ENCODE measurements at regions of chr2 and their contacts with region 1.

Region 1: GRCh38 chr2:213609570-213610170 is 325.4 kb downstream of the SPAG16 start:
- DNase-seq: no peak
- ATAC-seq: no peak
- H3K4me3 ChIP-seq: no peak overlapping the region
- H3K27ac ChIP-seq: no peak overlapping the region
- H3K4me1 ChIP-seq: no peaks in the 10 kb centered on the region
- H3K27me3 ChIP-seq: no peaks in the 10 kb centered on the region
- CTCF ChIP-seq: no peak
- EP300 ChIP-seq: no peak
- POLR2A ChIP-seq: no peak
- RAD21 ChIP-seq: no peak

Region 2: GRCh38 chr2:214193943-214194342 is 584.3 kb after region 1 on chr2:
- CTCF ChIA-PET with region 1: no interaction called
- POLR2A ChIA-PET with region 1: no interaction called
- in situ Hi-C with region 1: no loop called
- intact Hi-C with region 1: no loop called
- DNase-seq: no peak
- ATAC-seq: no peak
- H3K4me3 ChIP-seq: no peak overlapping the region
- H3K27ac ChIP-seq: no peak overlapping the region
- H3K4me1 ChIP-seq: no peaks in the 10 kb centered on the region
- H3K27me3 ChIP-seq: no peaks in the 10 kb centered on the region
- CTCF ChIP-seq: no peak
- EP300 ChIP-seq: no peak
- POLR2A ChIP-seq: no peak
- RAD21 ChIP-seq: no peak

Region 3: GRCh38 chr2:214865363-214865762 is 1255.7 kb after region 1 on chr2:
- CTCF ChIA-PET with region 1: no interaction called
- POLR2A ChIA-PET with region 1: no interaction called
- in situ Hi-C with region 1: no loop called
- intact Hi-C with region 1: loop called (anchors 10 kb)
- DNase-seq: no peak
- ATAC-seq: no peak
- H3K4me3 ChIP-seq: no peak overlapping the region
- H3K27ac ChIP-seq: no peak overlapping the region
- H3K4me1 ChIP-seq: no peaks in the 10 kb centered on the region
- H3K27me3 ChIP-seq: no peaks in the 10 kb centered on the region
- CTCF ChIP-seq: no peak
- EP300 ChIP-seq: no peak
- POLR2A ChIP-seq: no peak
- RAD21 ChIP-seq: no peak

Measured in HepG2 (cell line).